ENCODE measurements at regions of chr14 and their contacts with region 1.

Region 1: DNA sequence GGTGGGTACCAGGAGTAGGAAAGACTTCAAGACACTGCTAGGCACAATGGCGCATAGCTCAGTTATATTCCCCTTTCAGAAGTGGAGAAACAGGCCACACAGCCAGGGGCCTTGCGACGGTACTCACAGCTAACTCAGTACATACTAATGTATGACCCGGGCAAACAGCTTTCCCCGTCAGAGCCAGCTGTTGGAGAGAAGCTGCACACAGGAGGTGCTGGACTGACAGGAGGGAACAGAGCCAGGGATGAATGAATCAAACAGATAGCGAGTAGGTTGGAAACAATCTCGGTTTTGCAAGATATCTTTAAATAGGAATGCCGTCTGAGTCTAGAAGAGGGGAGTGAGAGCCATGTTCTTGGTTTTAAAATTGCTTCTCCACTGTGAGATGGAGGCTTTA is 45.5 kb downstream of the PRIMA1 start:
- DNase-seq: no peak

Region 2: DNA sequence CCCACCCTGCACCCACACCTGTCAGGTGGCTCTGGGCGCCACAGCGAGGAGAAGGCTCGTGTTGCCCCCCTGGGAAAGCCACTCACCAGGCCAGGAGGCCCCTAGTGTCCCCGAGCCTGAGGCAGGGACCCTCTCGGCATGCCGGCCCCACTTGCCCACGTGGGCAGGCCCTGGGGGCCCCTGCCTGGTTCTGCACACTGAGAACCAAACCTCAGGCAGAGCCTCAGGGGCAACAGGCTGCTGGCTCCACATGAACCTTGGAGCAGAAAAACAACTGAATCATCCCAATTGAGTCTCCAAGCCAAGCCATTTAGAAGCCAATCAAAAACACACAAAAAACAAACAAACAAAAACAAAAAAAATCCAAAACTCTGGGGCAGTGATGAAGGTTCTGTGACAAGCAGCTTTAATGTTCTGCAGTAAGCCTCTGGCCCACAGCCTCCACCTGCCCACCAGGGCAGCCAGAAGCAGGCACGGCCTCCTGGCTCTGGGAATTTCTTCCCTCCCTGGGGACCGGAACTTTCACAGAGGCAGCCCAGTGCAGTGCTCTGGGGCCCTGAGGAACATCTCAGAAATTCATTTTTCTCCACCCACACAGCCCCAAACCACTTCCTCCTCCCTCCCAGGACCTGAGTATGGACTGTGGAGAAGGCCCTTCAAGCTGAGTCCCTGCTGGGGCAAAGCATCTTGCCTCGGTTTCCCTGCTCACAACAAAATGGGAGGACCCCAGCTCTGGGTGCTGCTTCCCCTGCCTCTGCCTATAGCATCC is 729.6 kb before region 1 on chr14:
- intact Hi-C with region 1: loop called in 1 of 2 experiments (anchors 5 kb)
- DNase-seq: no peak

Region 3: DNA sequence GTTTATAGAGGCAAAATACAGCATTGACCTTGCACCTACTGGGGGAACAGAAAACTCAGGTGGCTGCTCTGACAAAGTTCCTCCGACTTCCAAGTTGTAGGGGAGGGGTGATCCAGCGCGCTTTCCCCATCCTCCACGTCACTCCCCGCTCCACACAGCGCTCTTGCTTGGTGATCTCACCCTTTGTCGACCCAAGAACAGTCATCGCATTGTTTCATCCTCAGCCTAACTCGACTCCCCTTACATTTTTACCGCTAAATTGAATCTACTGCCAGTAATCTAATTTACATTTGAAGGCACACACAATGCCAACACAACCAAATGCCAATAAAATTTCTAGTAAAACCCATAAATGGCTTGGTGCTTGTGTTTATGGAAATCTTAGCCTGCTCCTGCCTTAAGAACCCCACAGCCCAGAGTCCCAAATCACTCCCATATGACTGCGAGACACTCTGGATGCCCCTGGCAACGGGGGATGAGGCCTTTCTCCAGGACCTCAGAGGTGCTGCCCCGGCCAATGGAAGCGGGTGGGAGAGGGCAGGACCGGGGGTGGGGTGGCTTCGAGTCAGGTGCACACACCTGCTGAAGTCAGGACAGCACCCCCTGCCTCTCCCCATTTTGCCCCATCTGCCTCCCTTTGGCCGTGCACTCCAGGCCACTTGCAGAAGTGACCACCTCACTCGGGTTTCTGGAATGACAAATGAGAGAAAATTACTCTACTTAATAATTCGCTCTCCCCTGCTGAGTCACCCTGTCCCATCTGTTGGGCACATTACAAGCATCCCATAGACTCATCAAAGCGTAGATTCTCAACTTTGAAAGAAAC is 1125.4 kb after region 1 on chr14:
- intact Hi-C with region 1: loop called in 1 of 2 experiments (anchors 5 kb)
- DNase-seq: peak; percentile 60

Measured in posterior vena cava (tissue), 2 donors.